Left cardiac atrium (tissue), 4 donors: ENCODE measurements at regions of chr16 and their contacts with region 1.

Region 1: GRCh38 chr16:3190949-3191353 is 2.9 kb downstream of the OR1F1 start:
- DNase-seq: no peak
- ATAC-seq: no peak

Region 2: GRCh38 chr16:3328643-3329042 is 137.7 kb after region 1 on chr16:
- intact Hi-C with region 1: loop called in 1 of 2 experiments (anchors 10 kb)
- DNase-seq: no peak
- ATAC-seq: no peak